Dendritic cell treated with granulocyte-macrophage colony-stimulating factor and Interleukin-4, amounts not matched to agents 40 ng/mL and 50 ng/mL, for 4 days (primary cell): ENCODE measurements at regions of chr10 and their contacts with region 1.

Region 1: DNA sequence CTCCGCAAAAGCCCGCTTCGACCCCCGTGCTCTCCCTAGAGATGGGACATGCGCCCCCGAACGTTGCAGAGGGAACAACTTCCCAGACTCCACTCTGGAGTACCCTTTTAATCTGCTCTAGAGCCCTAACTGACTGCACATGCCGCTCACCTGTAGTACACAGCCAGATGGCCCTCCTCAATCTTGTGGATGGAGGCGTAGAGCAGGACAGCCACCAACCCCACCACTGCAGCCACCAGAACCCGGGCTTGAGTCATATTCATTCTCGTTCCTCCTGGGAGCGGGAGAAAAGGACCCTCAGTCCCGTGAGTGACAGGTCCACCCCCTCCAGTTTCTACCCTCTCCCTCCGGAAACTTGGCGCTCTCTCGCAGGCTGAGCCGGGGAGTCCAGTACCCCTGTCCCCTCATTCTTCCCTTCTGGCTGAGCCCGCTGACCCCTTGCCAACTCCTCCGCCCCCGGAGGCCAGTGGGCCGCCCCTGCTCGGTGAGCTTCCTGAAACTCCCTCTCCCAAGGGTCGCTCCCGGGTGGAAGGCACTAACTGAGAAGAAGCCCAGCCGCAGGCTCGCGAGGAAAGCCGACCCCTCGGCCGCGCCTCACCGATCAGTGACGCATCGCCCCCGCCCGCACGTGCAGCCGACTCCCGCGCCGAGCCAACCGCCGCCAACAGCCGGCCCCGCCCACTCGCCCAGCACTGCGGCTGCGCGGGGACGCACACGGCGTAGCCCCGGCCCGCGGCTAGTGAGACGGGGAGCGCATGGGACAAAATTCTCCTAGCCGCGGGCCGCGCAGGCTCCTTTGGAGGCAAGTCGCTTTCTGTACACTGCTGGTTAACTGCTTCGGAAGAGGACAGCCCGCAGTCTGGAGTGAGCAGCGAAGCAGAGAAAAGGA is at the start of gene ERLIN1:
- H3K4me3 Mint-ChIP-seq: peak within 1 kb of the TSS; percentile 90
- H3K27ac Mint-ChIP-seq: peak within 1 kb of the TSS; percentile 96
- H3K4me1 Mint-ChIP-seq: peaks cover 57% of the 10 kb centered on the region
- H3K27me3 Mint-ChIP-seq: no peaks in the 10 kb centered on the region

Region 2: DNA sequence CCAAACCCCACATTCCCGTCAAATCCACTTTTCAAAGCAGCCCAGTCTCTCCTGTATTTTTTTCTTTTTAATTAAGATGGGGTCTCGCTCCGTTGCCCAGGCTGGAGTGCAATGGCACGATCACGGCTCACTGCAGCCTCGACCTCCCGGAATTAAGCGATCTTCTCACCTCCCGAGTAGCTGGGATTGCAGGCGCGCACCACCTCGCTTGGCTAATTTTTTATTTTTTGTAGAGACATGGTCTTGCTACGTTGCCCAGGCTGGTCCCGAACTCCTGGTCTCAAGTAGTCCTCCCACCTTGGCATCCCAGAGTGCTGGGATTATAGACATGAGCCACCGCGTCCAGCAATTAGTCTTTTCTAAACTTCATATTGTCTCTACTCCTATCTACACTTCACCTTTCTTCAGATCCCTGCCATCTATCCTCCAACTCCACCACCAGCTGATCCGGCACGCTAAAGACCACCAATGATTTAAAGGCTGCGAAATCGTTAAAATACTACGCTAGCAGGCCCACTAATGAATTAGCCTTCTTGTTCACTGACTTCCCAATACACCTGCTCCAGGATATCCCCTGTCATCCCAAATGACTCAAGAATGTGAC is 44.3 kb after region 1 on chr10:
- intact Hi-C with region 1: loop called (anchors 1 kb)
- H3K4me3 Mint-ChIP-seq: peak overlapping the region; percentile 91
- H3K27ac Mint-ChIP-seq: peak overlapping the region; percentile 80
- H3K4me1 Mint-ChIP-seq: peaks cover 35% of the 10 kb centered on the region
- H3K27me3 Mint-ChIP-seq: no peaks in the 10 kb centered on the region